GM10248 (cell line): ENCODE measurements at regions of chr12 and their contacts with region 1.

Region 1: GRCh38 chr12:6873094-6874014 is at the start of gene SPSB2:
- DNase-seq: peak; percentile 98
- CTCF ChIP-seq: no peak

Region 2: DNA sequence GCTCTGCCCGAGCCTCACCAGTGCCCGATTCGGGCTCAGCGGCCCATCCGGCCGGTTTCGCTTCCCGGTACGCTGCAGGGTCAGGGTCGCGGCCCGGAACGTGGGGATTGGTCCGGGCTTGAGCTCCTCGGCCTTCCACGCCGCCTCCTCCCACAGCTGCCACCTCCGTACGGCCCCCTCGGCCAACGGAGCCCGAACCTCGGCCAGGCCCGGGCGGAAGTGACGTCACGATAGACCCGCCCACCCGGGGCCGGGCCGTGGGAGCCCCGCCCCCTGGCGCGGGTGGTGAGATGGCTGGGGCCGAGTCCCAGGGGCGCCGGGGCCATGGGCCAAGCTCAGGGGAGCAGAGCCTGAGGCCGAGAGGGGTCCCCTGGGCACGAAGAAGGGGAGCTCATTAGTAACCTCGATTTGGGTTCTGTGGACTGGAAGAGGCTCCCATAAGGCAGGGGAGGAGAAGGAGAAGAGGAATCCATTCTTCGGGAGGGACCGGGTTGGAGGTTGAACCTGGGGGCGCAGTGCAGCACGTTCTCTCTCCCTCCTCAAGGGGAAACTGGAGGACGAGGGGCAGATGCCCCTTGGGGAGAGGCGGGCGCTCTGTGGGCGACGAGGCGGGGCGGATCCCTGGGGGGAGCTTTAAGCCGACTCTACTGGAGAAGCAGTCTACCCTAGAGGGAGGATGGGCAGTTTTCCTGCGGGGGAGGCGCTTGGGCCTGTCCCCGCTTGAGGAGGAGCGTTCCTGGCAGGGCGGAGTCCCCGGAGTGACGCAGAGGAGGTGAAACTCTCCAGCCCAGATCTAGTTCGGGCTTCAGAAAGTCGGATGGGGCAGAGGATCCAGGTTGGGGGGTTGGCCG is 120.2 kb before region 1 on chr12 and contains the start of gene MLF2:
- CTCF ChIA-PET with region 1: interaction called, 16 read pairs
- POLR2A ChIA-PET with region 1: no interaction called
- DNase-seq: peak; percentile 99
- CTCF ChIP-seq: peak; percentile 96

Region 3: DNA sequence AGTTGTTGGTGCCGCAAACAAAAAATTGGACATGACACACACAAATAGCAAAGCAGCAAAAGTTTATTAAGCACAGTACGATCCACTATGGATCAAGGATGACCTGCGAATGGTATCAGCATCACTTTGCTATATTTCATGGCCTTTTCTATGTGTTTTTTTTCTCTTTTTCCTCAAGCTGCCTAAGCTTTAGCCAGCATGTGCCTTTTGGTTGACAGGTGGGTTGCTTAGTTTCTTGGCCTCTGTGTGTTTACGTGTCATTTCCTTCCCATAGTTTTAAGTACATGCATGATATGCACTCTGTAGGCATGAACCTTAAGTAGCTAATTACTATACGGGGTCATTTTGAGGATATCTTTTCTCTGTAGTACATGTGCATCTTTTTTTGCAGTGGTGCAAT is 74.2 kb before region 1 on chr12:
- CTCF ChIA-PET with region 1: no interaction called
- POLR2A ChIA-PET with region 1: no interaction called
- DNase-seq: no peak
- CTCF ChIP-seq: no peak

Region 4: GRCh38 chr12:6861391-6861790 is 12.0 kb before region 1 on chr12:
- CTCF ChIA-PET with region 1: interaction called, 130 read pairs
- POLR2A ChIA-PET with region 1: no interaction called
- DNase-seq: no peak
- CTCF ChIP-seq: no peak

Region 5: DNA sequence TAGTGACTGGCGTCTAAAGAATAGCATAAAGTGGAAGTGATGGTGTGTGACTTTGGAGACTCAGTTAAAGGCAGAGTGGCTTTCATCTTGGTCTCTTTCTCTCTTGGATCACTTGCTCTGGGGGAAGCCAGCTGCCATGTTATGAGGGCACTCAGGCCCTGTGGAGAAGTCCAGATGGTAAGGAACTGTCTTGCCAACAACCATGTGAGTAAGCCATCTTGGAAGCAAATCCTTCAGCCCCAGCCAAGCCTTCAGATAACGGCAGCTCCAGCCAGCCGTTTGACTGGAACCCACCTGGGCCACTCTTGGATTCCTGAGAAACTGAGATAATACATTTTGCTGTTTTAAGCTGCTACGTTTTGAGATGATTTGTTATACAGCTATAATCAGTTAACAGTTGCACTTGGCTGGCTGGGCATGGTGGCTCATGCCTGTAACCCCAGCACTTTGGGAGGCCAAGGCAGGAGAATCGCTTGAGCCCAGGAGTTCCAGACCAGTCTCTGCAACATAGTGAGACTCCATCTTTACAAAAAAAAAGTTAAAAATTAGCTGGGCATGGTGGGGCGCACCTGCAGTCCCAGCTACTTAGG is 23.6 kb after region 1 on chr12:
- CTCF ChIA-PET with region 1: interaction called, 50 read pairs
- POLR2A ChIA-PET with region 1: interaction called, 21 read pairs
- DNase-seq: no peak
- CTCF ChIP-seq: no peak

Region 6: GRCh38 chr12:6927379-6928024 is 54.1 kb after region 1 on chr12 and contains the start of gene ATN1:
- CTCF ChIA-PET with region 1: interaction called, 32 read pairs
- POLR2A ChIA-PET with region 1: interaction called, 6 read pairs
- DNase-seq: peak; percentile 71
- CTCF ChIP-seq: no peak

Region 7: DNA sequence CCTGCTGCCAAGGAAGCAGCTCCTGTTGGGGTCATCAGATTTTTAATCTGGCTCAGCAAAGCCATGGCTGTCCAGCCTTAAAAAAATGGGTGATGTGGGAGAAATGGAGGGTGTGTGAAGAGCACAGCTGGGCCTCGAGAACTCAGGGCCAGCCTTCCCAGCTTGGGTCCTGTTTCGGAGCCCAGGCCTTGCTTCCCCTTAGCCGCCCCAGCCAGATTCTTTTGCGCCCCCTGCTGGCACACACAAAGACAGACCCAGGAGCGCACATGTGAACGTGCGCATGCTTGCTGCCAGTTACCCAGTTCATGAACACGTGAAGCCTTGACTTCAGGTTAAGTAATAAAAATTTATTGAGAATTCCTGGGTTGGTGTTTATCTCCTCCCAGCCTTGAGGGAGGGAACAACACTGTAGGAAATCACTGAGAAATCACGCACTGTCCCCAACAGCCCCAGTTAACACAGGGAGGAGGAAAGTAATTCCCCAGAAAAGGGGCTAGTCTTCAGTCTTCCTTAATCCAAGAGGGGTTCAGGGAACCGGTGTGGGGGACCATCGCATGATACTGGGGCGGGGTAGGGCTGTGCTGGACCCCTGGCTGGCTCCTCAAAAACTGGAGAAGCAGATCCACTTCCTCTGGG is 91.8 kb after region 1 on chr12:
- CTCF ChIA-PET with region 1: interaction called, 24 read pairs
- POLR2A ChIA-PET with region 1: interaction called, 3 read pairs
- DNase-seq: peak; percentile 84
- CTCF ChIP-seq: peak; percentile 98